ENCODE measurements at regions of chr2 and their contacts with region 1.

Region 1: GRCh38 chr2:17753803-17754663 is at the starts of genes GEN1 and SMC6:
- DNase-seq: peak; percentile 94
- H3K4me3 ChIP-seq: peak within 1 kb of the TSS; percentile 74 to 96 (median 81)
- H3K27ac ChIP-seq: peak within 1 kb of the TSS; percentile 88
- H3K4me1 ChIP-seq: peaks cover 47% of the 10 kb centered on the region
- H3K27me3 ChIP-seq: no peaks in the 10 kb centered on the region
- CTCF ChIP-seq: no peak
- POLR2A ChIP-seq: peak; percentile 12
- total RNA-seq, gene GEN1: 20.8 and 29.6 TPM in 2 replicates
- total RNA-seq, gene SMC6: 35.4 and 38.3 TPM in 2 replicates

Region 2: GRCh38 chr2:16665748-16666448 is 1088.1 kb before region 1 on chr2 and contains the start of gene CYRIA:
- CTCF ChIA-PET with region 1: no interaction called
- POLR2A ChIA-PET with region 1: no interaction called
- dilution Hi-C with region 1: no loop called
- intact Hi-C with region 1: loop called (anchors 10 kb)
- DNase-seq: no peak
- H3K4me3 ChIP-seq: peak within 1 kb of the TSS; percentile 49 to 86 (median 70)
- H3K27ac ChIP-seq: peak within 1 kb of the TSS; percentile 98
- H3K4me1 ChIP-seq: peaks cover 36% of the 10 kb centered on the region
- H3K27me3 ChIP-seq: no peaks in the 10 kb centered on the region
- CTCF ChIP-seq: no peak
- POLR2A ChIP-seq: peak; percentile 43
- total RNA-seq, gene CYRIA: 38.4 and 40.3 TPM in 2 replicates

Region 3: GRCh38 chr2:17736989-17737388 is 17.0 kb before region 1 on chr2:
- CTCF ChIA-PET with region 1: interaction called, 4 read pairs
- POLR2A ChIA-PET with region 1: interaction called, 3 read pairs
- dilution Hi-C with region 1: no loop called
- intact Hi-C with region 1: loop called (anchors 1 kb)
- DNase-seq: peak; percentile 85
- H3K4me3 ChIP-seq: no peak overlapping the region
- H3K27ac ChIP-seq: peak overlapping the region; percentile 94
- H3K4me1 ChIP-seq: peaks cover 20% of the 10 kb centered on the region
- H3K27me3 ChIP-seq: no peaks in the 10 kb centered on the region
- CTCF ChIP-seq: no peak
- POLR2A ChIP-seq: no peak

Region 4: DNA sequence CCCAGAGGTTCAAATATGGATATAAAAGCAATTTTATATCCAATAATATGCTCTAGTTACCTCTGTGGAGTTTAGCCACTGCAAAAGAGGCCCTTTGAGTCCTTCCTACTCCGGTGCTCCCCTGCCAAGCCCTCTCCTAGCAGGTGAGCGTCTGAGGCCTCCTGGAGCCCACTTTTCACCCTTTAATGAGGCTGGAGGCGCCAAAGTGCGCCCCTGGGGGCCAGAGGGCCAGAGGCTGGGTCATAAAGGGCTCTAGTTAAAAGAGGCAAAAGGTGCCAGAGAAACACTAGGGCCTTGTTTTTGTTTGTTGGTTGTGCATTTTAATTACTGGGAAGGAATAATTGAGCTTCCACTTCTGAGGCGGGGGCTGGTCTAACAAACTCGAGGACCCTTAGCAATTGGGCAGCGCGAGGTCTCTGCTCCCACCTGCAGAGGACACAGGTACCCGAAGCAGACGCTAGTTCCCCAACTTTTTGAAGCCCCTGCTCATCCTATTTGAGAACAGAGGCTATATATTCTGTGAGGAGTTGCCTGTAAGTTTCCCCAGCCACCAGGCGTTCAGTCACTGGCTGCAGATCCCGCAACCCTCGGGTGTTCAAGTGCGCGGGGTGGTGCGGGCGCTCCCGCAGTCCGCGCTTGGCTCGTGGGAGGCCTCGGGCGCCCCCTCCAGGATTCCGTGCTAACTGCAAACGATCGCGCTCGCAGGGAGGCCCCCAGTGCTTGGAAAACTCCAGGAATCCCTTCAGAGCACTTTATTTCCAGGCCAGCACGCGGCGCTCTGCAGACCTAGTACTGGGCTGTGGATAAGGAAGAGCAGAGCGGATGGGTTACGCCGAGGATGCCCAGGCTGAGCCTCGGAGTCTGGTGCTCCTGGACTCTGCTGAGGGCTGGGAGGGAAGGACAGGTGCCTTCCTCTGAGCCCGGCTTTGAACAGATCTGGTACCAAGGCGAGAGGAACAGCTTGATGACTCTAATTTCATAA is 76.3 kb after region 1 on chr2:
- CTCF ChIA-PET with region 1: no interaction called
- POLR2A ChIA-PET with region 1: no interaction called
- dilution Hi-C with region 1: no loop called
- intact Hi-C with region 1: loop called (anchors 2 kb)
- DNase-seq: peak; percentile 89
- H3K4me3 ChIP-seq: no peak overlapping the region
- H3K27ac ChIP-seq: no peak overlapping the region
- H3K4me1 ChIP-seq: no peaks in the 10 kb centered on the region
- H3K27me3 ChIP-seq: peaks cover 8 to 30% of the 10 kb centered on the region in 2 experiments
- CTCF ChIP-seq: peak; percentile 95 to 98
- POLR2A ChIP-seq: no peak

Region 5: GRCh38 chr2:18378020-18378653 is 624.1 kb after region 1 on chr2:
- CTCF ChIA-PET with region 1: interaction called, 3 read pairs
- POLR2A ChIA-PET with region 1: no interaction called
- dilution Hi-C with region 1: no loop called
- intact Hi-C with region 1: loop called (anchors 10 kb)
- DNase-seq: peak; percentile 54
- H3K4me3 ChIP-seq: no peak overlapping the region
- H3K27ac ChIP-seq: no peak overlapping the region
- H3K4me1 ChIP-seq: peaks cover 9% of the 10 kb centered on the region
- H3K27me3 ChIP-seq: no peaks in the 10 kb centered on the region
- CTCF ChIP-seq: peak; percentile 68 to 77
- POLR2A ChIP-seq: no peak